Activated B cell treated with CpG ODN at 0.5 μM for 24 hours (primary cell): ENCODE measurements at regions of chr3 and their contacts with region 1.

Region 1: GRCh38 chr3:179438841-179439240 is 12.4 kb downstream of the GNB4 start:
- DNase-seq: peak; percentile 41
- ATAC-seq: peak; percentile 96
- H3K4me3 Mint-ChIP-seq: peak overlapping the region; percentile 71
- H3K27ac Mint-ChIP-seq: peak overlapping the region; percentile 92
- H3K4me1 Mint-ChIP-seq: peaks cover 51% of the 10 kb centered on the region
- H3K27me3 Mint-ChIP-seq: no peaks in the 10 kb centered on the region
- CTCF ChIP-seq: no peak

Region 2: DNA sequence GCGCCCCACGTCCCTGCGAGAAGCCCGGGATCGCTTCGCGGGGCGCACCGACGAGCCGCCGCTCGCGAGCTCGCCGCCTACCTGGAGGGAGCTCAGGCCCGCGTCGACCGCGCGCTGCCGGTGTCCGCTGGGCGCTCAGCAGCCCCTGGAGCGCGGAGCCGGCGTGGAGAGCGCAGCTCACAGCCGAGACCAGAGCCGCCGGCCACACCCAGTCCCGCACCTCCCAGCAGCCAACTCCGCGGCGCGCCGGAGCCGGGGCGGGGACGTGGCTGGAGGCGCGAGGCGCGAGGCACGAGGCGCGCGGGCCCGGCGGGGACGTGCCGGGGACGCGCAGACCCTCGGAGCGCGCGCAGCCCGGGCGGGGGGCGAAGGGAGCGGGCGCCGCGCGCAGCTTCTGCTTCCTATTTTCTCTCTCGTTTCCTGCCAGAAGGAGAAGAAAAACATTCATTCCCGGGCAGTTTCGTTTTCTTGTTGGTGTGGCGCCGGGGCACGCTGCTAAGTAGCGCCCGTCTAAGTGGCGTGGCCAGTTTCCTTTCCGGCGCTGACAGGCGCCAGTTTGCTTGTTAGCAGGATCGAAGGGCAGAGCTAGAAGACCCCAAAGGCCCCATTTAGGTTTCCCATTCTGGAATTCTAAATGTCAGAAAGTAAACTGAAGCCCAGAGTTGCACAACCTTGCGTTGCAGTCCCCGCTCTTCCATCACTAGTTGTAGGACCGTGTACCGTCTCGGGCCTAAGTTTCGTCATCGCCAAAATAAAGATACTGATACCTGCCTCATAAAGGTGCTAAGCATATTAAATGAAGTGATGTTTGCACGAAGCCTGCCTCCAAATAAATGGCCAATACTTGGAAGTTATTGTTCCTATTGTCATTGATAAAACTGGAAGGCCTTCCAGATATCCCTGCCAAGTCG is 12.7 kb after region 1 on chr3 and contains the start of gene GNB4:
- CTCF ChIA-PET with region 1: no interaction called
- POLR2A ChIA-PET with region 1: interaction called, 8 read pairs
- intact Hi-C with region 1: loop called (anchors 1 kb)
- DNase-seq: peak; percentile 74
- ATAC-seq: peak; percentile 88
- H3K4me3 Mint-ChIP-seq: peak within 1 kb of the TSS; percentile 92
- H3K27ac Mint-ChIP-seq: peak within 1 kb of the TSS; percentile 93
- H3K4me1 Mint-ChIP-seq: peaks cover 35% of the 10 kb centered on the region
- H3K27me3 Mint-ChIP-seq: no peaks in the 10 kb centered on the region
- CTCF ChIP-seq: no peak
- total RNA-seq, gene GNB4: 18.0 and 22.7 TPM in 2 replicates

Region 3: GRCh38 chr3:179464323-179465089 is 25.7 kb after region 1 on chr3:
- CTCF ChIA-PET with region 1: no interaction called
- POLR2A ChIA-PET with region 1: no interaction called
- intact Hi-C with region 1: no loop called
- DNase-seq: no peak
- ATAC-seq: no peak
- H3K4me3 Mint-ChIP-seq: peak overlapping the region; percentile 62
- H3K27ac Mint-ChIP-seq: no peak overlapping the region
- H3K4me1 Mint-ChIP-seq: peaks cover 15% of the 10 kb centered on the region
- H3K27me3 Mint-ChIP-seq: no peaks in the 10 kb centered on the region
- CTCF ChIP-seq: no peak